Activated naive CD4-positive, alpha-beta T cell treated with anti-CD3 and anti-CD28 coated beads, Interleukin-2, amount 10 ng/mL, durations not matched to agents 7 days and 5 days (primary cell): ENCODE measurements at regions of chr6 and their contacts with region 1.

Region 1: DNA sequence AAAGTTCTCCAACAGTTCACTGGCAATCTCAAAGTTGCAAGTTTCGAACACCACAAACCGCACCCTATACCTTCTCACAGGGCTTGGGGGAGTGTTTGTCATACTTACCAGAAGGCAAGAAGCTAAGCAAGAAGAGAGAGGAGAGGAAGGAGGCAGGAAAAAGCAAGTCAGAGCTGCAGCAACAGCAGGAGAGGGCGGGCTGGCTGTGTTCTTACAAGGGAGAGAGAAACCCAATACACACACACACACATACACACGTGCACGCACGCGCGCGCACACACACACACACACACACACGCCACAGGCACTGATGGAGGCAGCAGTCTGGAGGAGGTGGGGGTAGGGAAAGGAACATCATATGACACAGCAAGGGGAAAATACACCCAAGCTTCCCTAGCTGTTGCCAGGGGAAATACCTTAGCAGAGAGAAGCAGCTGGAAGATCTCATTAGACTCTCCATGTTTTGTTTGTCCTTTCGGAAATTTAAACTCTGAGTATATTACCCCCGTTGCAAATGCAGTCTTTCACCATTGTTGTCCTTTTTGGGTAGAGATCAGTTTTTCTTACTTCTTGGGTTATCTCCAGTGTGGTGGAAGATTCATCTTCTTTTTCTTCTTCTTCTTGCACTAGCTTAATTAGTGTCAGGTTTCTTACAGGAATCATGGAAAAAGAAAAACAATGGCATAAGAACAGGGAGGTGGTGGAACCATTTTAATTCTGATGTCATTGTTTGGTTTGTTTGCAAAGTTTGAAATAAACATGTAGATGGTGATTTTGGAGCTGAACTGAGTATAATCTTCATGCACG is at the start of gene TXLNB:
- DNase-seq: peak; percentile 92
- H3K4me3 Mint-ChIP-seq: peak within 1 kb of the TSS; percentile 70
- H3K27ac Mint-ChIP-seq: peak within 1 kb of the TSS; percentile 97
- H3K4me1 Mint-ChIP-seq: peaks cover 54% of the 10 kb centered on the region
- H3K27me3 Mint-ChIP-seq: no peaks in the 10 kb centered on the region

Region 2: DNA sequence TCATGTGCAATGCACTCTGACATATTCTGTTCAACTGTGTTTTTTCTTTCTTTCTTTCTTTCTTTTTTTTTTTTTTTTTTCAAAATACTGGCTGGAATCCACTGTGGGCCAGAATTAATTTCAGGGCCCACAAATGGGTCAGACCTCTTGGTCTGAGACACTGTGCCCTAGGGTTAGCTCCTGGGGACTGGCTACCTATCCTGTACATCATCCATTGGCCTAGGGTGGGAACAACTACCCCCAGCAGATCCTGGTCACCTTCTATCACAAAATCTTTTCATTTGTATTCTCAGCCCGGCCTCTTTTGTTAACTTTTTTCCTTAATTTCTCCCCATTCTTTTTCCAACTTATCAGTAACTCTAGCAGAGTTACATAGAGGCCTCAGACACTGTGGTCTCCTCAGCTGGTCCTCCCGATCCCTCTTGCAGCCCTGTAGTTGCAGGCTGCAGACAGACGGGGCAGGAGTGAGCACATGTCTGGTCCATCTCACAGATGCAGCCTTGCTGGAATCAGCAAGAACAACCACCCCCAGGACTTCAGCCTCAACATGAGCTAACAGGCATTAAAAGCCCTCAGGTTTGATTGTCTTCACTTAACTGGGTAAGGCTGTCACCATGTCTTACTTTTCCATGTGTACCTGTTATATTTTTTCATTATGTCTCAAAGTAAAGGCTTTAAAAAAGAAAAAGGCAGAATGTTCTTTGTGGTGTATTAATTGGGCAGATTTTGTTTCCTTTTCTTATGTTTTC is 41.5 kb before region 1 on chr6:
- CTCF ChIA-PET with region 1: interaction called, 23 read pairs
- DNase-seq: peak; percentile 72
- H3K4me3 Mint-ChIP-seq: peak overlapping the region; percentile 52
- H3K27ac Mint-ChIP-seq: peak overlapping the region; percentile 96
- H3K4me1 Mint-ChIP-seq: peaks cover 51% of the 10 kb centered on the region
- H3K27me3 Mint-ChIP-seq: no peaks in the 10 kb centered on the region

Region 3: GRCh38 chr6:139375232-139376016 is 83.4 kb after region 1 on chr6:
- CTCF ChIA-PET with region 1: interaction called, 11 read pairs
- DNase-seq: peak; percentile 91
- H3K4me3 Mint-ChIP-seq: peak overlapping the region; percentile 97
- H3K27ac Mint-ChIP-seq: peak overlapping the region; percentile 100
- H3K4me1 Mint-ChIP-seq: peaks cover 31% of the 10 kb centered on the region
- H3K27me3 Mint-ChIP-seq: peaks cover 3% of the 10 kb centered on the region

Region 4: DNA sequence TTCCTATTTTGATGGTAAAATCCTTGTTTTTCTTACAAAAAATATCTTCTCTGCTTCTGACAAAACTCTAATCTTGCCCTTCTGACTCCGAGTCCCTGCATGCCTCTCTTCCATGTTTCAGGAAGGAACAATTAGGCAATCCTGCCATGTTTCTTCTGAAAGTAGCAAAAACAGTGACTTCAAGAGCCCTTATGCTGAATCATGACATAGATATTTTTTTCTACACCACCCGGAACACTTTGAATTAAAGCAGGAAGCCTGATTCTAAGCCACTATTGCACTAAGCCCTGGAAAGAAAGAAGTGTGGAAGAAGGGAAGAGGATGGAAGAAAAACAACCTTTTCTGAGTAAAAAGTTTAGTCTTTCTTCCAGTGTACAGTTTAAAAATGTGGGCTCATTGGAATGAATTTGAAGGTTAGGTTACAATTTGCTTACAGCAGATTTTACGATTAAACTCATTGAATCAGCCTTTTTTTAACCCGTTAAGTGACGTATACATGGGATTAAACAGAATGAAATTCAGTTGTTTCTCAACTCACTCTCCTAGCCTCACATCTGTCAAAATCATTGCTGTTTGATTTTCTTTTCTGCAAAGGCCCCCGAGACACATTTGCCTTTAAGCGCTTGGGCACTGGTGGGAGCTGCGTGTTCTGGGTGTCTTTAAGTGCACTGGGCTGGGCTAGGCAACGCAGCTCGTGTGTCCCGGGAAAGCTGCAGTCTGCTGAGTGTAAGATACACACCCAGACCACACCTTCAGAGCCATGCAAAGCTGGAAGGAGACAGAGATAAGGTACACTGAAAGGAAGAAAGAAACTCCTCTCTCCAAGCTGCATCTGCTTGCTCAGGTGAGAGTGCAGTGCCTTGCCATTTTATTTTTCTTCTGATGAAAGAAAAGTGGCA is 241.8 kb after region 1 on chr6:
- CTCF ChIA-PET with region 1: no interaction called
- DNase-seq: no peak
- H3K4me3 Mint-ChIP-seq: no peak overlapping the region
- H3K27ac Mint-ChIP-seq: peak overlapping the region; percentile 91
- H3K4me1 Mint-ChIP-seq: peaks cover 42% of the 10 kb centered on the region
- H3K27me3 Mint-ChIP-seq: no peaks in the 10 kb centered on the region

Region 5: DNA sequence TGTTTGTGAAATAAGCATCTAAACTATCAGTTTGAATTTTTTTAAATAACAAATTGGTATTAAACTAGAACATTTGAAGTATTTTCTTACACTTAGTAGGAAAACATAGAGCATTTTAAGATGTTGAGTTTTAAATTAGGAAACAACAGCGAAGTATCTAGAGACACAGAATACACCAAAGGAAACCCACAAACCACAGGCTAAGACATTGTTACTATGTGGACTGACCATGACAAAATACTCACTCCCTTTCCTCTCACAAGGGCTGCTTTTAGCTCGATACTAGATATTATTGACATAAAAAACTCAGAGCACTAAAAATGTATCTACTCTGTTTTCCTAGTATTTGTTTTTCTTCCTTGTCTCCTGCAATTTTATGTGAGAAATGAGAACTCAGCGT is 348.4 kb after region 1 on chr6:
- CTCF ChIA-PET with region 1: no interaction called
- DNase-seq: no peak
- H3K4me3 Mint-ChIP-seq: no peak overlapping the region
- H3K27ac Mint-ChIP-seq: no peak overlapping the region
- H3K4me1 Mint-ChIP-seq: peaks cover 7% of the 10 kb centered on the region
- H3K27me3 Mint-ChIP-seq: peaks cover 8% of the 10 kb centered on the region